ENCODE measurements at regions of chr19 and their contacts with region 1.

Region 1: DNA sequence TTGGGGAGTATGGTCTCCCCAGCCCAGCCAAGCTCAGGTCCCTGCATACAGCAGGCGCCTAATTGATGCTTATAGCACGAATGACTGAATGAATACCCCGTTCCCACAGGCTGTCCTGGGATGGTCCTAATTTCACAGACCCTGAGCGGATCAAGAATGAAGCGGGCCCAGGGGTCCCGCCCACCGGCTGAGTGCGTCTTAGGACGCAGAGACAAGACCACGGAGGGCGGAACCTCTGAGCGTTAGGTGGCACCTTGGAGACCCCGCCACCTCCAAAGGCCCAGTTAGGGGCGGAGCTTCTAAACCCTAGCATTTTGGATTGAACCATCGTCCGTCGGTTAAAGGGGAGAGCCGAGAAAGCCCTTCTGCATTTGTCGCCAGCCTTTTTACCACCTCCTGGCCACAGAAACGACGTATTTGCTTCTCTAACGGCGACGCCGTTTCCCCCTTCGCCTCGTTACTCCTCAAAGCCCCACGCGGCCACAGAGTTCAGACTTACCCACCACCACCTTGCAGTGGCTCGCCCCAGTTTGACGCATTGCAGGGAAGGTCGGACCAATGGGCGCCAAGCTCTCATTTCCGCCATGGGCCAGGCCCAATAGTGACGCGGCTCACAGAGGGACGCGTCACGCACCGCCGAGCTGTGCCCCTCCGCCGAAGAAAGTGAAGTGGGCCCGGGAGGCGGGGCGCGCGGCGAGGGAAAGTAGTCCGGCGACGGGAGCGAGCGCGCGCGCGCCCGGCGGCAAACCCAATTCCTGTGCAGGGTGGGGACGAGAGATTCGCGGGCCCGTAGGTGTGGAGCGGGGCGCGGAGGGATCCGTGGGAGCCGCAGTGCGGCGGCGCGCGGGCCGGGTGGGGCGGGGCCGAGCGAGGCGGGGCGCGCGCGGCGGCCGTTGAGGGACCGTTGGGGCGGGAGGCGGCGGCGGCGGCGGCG is 479 bp upstream of the CALM3 start:
- DNase-seq: peak; percentile 96
- ATAC-seq: peak; percentile 89
- H3K4me3 Mint-ChIP-seq: peak overlapping the region; percentile 88
- H3K27ac Mint-ChIP-seq: peak overlapping the region; percentile 100
- H3K4me1 Mint-ChIP-seq: peaks cover 27% of the 10 kb centered on the region
- H3K27me3 Mint-ChIP-seq: no peaks in the 10 kb centered on the region; the same call in 1 of the 2 replicates
- CTCF ChIP-seq: no peak

Region 2: DNA sequence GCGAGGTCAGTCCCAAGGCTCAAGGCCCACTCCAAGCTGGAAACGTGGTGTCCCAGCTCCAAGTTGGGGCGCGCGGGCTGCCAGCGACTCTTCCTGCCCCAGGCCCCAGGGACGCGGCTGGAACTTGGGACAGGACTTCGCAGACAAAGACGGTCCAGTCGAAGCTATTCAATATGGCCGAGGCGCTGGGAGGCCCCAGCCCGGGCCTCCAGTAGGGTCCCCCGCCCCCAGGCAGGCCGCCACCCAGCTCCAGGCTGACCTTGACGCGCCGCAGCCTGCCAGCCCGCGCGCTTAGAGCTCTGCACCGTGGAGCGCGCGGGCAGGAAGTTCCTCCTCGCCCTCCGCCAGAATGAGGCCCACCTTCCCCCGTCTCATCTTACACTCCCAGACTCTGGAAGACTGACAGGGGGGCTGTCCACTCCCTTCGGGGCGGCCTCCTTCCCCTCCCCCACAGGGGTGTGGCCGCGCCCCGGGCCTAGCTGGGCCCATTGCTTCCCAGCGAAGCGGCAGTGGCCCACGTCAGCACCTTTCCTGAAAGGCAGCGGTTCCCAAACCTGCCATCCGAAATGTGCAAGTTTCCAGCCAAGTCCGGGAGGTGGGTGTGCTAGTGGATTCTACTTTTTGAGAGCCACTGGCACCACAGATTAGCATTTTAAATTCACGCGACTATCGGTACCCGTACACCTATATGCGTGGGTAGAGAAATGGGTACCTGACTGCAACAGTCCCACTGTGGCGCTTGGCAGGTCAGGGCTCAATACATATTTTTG is 187.2 kb before region 1 on chr19 and contains the start of gene CCDC8:
- CTCF ChIA-PET with region 1: interaction called, 3 read pairs
- POLR2A ChIA-PET with region 1: interaction called, 10 read pairs
- DNase-seq: peak; percentile 94
- ATAC-seq: peak; percentile 88
- H3K4me3 Mint-ChIP-seq: peak within 1 kb of the TSS; percentile 95
- H3K27ac Mint-ChIP-seq: peak within 1 kb of the TSS; percentile 94
- H3K4me1 Mint-ChIP-seq: peaks cover 55% of the 10 kb centered on the region
- H3K27me3 Mint-ChIP-seq: peaks cover 6% of the 10 kb centered on the region
- CTCF ChIP-seq: no peak
- total RNA-seq, gene CCDC8: 25.2 to 27.2 TPM (median 25.7 TPM) in 3 replicates

Region 3: DNA sequence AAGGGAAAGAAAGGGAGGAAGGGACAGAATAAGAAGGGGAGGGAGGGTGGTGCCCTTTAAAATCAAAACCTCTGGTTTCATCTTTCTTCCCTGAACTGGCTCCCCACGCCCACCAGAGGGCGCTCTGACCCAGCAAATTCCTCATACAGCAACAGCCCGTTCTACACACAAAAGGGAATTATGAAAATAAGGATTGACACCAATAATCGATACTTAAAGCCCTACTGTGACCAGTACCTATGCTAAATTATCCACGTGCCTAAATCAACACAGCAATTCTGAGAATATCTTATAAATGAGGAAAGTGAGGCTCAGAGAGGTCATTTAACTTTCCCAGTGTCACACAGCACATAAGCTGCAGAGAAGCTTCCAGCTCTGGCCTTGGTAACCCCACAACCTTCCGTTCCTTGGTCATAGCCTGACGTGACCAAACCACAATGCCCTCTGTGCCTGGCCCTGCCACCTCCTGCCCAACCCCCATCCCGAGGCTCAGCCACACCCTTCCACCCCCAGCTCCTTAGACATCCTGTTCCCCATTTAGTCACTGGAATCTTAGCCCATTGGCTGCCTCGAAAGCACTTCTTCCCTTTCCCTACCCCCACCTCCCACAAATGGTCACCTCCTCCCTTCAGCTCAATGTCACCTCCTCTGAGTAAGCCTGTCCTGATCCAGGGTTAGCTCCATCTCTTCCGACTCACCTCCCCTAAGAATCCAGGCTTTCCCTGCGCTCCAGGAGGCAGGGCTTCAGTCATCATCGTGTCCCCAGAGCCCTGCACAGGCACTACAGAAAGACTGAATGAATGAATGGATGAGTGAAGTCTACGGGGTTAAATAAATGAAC is 70.8 kb before region 1 on chr19:
- CTCF ChIA-PET with region 1: interaction called, 25 read pairs
- POLR2A ChIA-PET with region 1: no interaction called
- DNase-seq: peak; percentile 81
- ATAC-seq: peak; percentile 48
- H3K4me3 Mint-ChIP-seq: peak overlapping the region; percentile 40
- H3K27ac Mint-ChIP-seq: peak overlapping the region; percentile 55; the same call in 1 of the 2 replicates
- H3K4me1 Mint-ChIP-seq: peaks cover 26% of the 10 kb centered on the region
- H3K27me3 Mint-ChIP-seq: peaks cover 3% of the 10 kb centered on the region; the same call in 1 of the 2 replicates
- CTCF ChIP-seq: peak; percentile 96

Region 4: GRCh38 chr19:46537136-46538097 is 63.2 kb before region 1 on chr19:
- CTCF ChIA-PET with region 1: interaction called, 22 read pairs
- POLR2A ChIA-PET with region 1: no interaction called
- DNase-seq: peak; percentile 83
- ATAC-seq: peak; percentile 89
- H3K4me3 Mint-ChIP-seq: no peak overlapping the region
- H3K27ac Mint-ChIP-seq: no peak overlapping the region
- H3K4me1 Mint-ChIP-seq: 0 out of 2 replicates have a peak, but pooled peaks cover 2% of the 10 kb centered on the region
- H3K27me3 Mint-ChIP-seq: peaks cover 5% of the 10 kb centered on the region
- CTCF ChIP-seq: peak; percentile 92

Region 5: DNA sequence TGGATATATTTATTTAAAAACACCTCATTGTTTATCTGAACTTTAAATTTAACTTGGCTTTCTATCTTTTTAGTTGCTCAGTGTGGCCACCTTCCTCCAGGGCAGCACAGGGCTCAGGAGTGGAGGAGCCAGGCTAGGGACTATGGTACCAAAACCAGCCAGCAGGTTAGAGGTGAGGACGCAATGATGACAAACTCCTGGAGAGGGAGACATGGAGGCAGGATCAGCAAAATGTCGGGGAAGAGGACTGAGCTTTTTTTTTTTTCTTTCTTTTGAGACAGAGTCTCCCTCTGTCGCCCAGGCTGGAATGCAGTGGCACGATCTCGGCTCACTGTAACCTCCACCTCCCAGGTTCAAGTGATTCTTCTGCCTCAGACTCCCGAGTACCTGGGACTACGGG is 29.1 kb before region 1 on chr19:
- CTCF ChIA-PET with region 1: interaction called, 16 read pairs
- POLR2A ChIA-PET with region 1: interaction called, 4 read pairs
- DNase-seq: peak; percentile 61
- ATAC-seq: peak; percentile 100
- H3K4me3 Mint-ChIP-seq: no peak overlapping the region
- H3K27ac Mint-ChIP-seq: no peak overlapping the region
- H3K4me1 Mint-ChIP-seq: peaks cover 6% of the 10 kb centered on the region; the same call in 1 of the 2 replicates
- H3K27me3 Mint-ChIP-seq: peaks cover 10% of the 10 kb centered on the region
- CTCF ChIP-seq: no peak

Region 6: DNA sequence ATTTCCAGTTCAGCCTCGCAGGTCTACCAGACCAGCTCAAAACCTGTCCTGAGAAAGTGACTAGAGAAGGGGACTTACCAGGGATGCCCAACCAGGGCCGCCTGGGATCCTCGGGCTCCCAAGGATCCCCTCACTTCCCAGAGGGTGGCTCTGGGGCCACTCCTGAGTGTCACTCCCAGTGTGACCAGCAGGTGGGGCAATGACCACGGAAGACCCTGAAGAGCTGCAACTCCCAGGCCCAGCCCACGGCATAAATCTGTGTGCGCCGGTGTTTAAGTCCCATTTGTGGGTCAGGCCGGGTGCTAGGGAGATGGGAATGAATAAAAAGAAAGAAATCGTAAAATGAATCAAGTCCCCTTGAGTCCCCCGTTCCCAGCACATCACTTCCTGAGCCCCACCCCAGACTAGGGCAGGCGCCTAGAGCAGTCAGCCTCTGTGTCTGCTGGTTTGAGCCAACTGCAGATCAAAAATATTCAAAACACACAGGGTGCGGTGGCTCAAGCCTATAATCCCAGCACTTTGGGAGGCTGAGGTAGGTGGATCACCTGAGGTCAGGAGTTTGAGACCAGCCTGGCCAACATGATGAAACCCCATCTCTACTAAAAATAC is 13.6 kb after region 1 on chr19:
- CTCF ChIA-PET with region 1: interaction called, 53 read pairs
- POLR2A ChIA-PET with region 1: interaction called, 5 read pairs
- DNase-seq: peak; percentile 93
- ATAC-seq: peak; percentile 88
- H3K4me3 Mint-ChIP-seq: 0 out of 2 replicates have a peak overlapping the region, but pooled peaks have one; percentile 24
- H3K27ac Mint-ChIP-seq: no peak overlapping the region
- H3K4me1 Mint-ChIP-seq: peaks cover 9% of the 10 kb centered on the region
- H3K27me3 Mint-ChIP-seq: peaks cover 3% of the 10 kb centered on the region; the same call in 1 of the 2 replicates
- CTCF ChIP-seq: peak; percentile 88

Region 7: DNA sequence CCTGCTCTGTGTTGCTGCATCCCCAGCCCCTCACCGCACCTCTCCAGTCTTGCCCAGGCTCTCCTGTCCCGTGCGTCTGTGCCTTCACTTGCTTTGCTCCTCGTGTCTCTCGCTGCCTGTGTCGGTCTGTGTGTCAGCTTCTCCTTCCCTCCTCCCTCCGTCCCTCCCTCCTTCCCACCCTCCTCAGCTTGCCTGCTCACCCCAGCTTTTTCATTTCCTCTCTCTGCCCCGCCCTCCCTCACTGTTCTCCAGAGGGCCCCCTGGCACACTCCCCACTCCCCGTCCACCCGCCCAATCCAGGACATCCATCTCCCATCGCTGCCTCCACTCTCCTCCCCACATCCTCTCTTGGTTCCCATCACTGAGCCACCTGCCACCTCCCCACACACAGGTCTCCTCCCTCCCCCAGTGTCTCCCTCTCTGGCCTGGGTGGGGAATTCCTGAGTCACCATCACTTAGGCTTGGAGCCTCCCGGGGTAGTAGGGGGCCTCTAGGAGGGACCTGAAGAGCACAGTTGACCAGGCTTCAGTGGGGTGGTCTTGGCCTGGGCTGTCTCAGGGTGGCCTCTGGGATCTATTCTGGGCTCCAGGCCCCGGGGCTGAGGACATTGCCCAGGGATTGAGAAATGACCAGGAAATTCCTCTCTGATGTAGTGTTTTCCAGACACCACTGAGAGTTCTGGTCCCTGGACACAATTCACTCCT is 24.5 kb after region 1 on chr19 and contains the start of gene PTGIR:
- CTCF ChIA-PET with region 1: interaction called, 18 read pairs
- POLR2A ChIA-PET with region 1: interaction called, 3 read pairs
- DNase-seq: no peak
- ATAC-seq: peak; percentile 53
- H3K4me3 Mint-ChIP-seq: no peak within 1 kb of the TSS
- H3K27ac Mint-ChIP-seq: no peak within 1 kb of the TSS
- H3K4me1 Mint-ChIP-seq: peaks cover 8% of the 10 kb centered on the region
- H3K27me3 Mint-ChIP-seq: no peaks in the 10 kb centered on the region; the same call in 1 of the 2 replicates
- CTCF ChIP-seq: no peak
- total RNA-seq, gene PTGIR: 0.24 TPM in 1 of 3 replicates, not detected in the others